Sciatic nerve (tissue), 2 donors: ENCODE measurements at regions of chr3 and their contacts with region 1.

Region 1: GRCh38 chr3:3783210-3783609 is 16.0 kb upstream of the LRRN1 start:
- DNase-seq: no peak
- ATAC-seq: no peak

Region 2: GRCh38 chr3:2274526-2274925 is 1508.7 kb before region 1 on chr3:
- intact Hi-C with region 1: loop called (anchors 5 kb)
- DNase-seq: no peak
- ATAC-seq: no peak

Region 3: GRCh38 chr3:3447641-3448040 is 335.6 kb before region 1 on chr3:
- intact Hi-C with region 1: no loop called
- DNase-seq: no peak
- ATAC-seq: no peak